Activated naive CD8-positive, alpha-beta T cell treated with anti-CD3 and anti-CD28 coated beads, Interleukin-2, amount 10 ng/mL, durations not matched to agents 7 days and 5 days (primary cell): ENCODE measurements at regions of chr4 and their contacts with region 1.

Region 1: DNA sequence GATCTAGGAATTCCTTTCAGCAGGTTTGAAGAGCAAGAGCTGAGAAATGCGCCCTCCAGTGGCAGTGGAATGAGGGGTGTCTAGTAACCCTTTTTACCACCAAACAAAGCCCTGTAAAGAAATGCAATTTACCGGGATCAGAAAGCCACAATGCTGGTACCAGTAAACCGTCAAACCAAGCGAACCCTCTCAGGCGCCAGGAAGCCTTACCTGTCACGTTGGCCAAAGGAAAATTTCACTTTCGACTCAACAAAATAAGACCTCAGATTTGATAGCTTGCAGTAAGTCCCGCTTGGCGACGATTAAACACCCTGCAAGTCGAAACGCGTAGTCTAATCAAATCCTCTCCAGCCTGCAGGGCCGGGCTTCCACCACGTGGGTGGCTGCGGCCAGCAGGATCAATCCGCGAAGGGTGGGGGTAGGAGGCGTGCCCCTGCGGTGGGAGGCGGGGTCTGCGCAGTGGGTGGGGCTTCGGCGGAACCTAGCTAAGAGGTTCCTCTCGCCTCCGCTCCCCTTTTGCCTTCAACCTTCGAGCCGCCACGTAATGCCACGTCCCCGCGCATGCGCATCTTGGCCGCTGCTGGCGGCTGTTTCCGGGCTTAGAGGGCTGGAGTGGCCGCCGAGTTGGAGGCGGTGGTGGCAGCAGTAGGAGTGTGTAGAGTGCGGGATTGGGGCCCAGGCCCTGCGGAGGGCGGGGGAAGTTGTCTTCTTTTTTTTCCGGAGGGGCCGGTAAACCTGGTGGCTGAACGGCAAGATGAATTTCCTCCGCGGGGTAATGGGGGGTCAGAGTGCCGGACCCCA is at the start of gene USO1:
- DNase-seq: peak; percentile 99
- ATAC-seq: peak; percentile 90
- H3K4me3 Mint-ChIP-seq: peak within 1 kb of the TSS; percentile 94
- H3K27ac Mint-ChIP-seq: peak within 1 kb of the TSS; percentile 98
- H3K4me1 Mint-ChIP-seq: peaks cover 39% of the 10 kb centered on the region
- H3K27me3 Mint-ChIP-seq: no peaks in the 10 kb centered on the region
- total RNA-seq, gene USO1: 32.3 to 34.6 TPM

Region 2: GRCh38 chr4:75514131-75514948 is 209.9 kb before region 1 on chr4 and contains the starts of genes RCHY1 and THAP6:
- POLR2A ChIA-PET with region 1: interaction called, 30 read pairs
- DNase-seq: peak; percentile 92
- ATAC-seq: peak; percentile 90
- H3K4me3 Mint-ChIP-seq: no peak within 1 kb of the TSS
- H3K27ac Mint-ChIP-seq: peak within 1 kb of the TSS; percentile 99
- H3K4me1 Mint-ChIP-seq: peaks cover 28% of the 10 kb centered on the region
- H3K27me3 Mint-ChIP-seq: no peaks in the 10 kb centered on the region
- total RNA-seq, gene RCHY1: 27.4 to 29.2 TPM
- total RNA-seq, gene THAP6: 22.4 to 25.1 TPM

Region 3: GRCh38 chr4:75653845-75654503 is 70.3 kb before region 1 on chr4:
- POLR2A ChIA-PET with region 1: interaction called, 35 read pairs
- DNase-seq: no peak
- ATAC-seq: peak; percentile 6
- H3K4me3 Mint-ChIP-seq: peak overlapping the region; percentile 73
- H3K27ac Mint-ChIP-seq: peak overlapping the region; percentile 89
- H3K4me1 Mint-ChIP-seq: peaks cover 58% of the 10 kb centered on the region
- H3K27me3 Mint-ChIP-seq: no peaks in the 10 kb centered on the region

Region 4: DNA sequence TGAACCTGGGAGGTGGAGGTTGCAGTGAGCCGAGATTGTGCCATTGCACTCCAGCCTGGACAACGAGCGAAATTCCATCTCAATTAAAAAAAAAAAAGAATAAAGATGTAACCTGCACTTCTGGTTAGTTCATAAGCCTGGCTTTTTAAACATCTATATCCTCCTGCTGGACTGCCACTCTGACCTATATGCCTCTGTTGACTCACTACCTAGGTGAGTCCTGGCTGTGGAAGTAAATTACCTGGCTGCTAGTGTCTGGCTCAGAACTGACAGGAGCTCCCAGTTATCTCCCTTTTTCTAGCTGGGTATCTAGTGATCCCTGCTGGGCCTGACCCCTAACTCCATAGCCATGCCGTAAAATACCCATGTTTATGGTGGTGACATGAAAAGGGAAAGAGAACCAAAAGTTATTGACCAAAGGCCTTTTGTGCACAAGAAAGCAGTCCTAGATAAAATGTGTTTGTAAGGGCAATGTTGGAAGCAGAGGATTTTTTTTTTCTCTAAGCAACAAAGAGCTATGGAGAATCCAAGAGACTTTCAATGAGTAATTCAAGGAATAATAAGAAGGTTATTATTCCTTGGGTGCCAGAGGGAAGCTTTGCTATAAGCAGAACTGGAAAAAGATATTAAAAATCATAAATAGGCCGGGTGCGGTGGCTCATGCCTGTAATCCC is 40.6 kb before region 1 on chr4:
- POLR2A ChIA-PET with region 1: interaction called, 12 read pairs
- DNase-seq: no peak
- ATAC-seq: no peak
- H3K4me3 Mint-ChIP-seq: no peak overlapping the region
- H3K27ac Mint-ChIP-seq: peak overlapping the region; percentile 60
- H3K4me1 Mint-ChIP-seq: peaks cover 35% of the 10 kb centered on the region
- H3K27me3 Mint-ChIP-seq: no peaks in the 10 kb centered on the region

Region 5: GRCh38 chr4:75940692-75941253 is 216.5 kb after region 1 on chr4 and contains the start of gene NAAA:
- POLR2A ChIA-PET with region 1: interaction called, 16 read pairs
- DNase-seq: peak; percentile 88
- ATAC-seq: peak; percentile 83
- H3K4me3 Mint-ChIP-seq: peak within 1 kb of the TSS; percentile 97
- H3K27ac Mint-ChIP-seq: peak within 1 kb of the TSS; percentile 97
- H3K4me1 Mint-ChIP-seq: peaks cover 13% of the 10 kb centered on the region
- H3K27me3 Mint-ChIP-seq: no peaks in the 10 kb centered on the region
- total RNA-seq, gene NAAA: 48.3 to 50.5 TPM